CD14-positive monocyte (primary cell): ENCODE measurements at regions of chr19 and their contacts with region 1.

Region 1: DNA sequence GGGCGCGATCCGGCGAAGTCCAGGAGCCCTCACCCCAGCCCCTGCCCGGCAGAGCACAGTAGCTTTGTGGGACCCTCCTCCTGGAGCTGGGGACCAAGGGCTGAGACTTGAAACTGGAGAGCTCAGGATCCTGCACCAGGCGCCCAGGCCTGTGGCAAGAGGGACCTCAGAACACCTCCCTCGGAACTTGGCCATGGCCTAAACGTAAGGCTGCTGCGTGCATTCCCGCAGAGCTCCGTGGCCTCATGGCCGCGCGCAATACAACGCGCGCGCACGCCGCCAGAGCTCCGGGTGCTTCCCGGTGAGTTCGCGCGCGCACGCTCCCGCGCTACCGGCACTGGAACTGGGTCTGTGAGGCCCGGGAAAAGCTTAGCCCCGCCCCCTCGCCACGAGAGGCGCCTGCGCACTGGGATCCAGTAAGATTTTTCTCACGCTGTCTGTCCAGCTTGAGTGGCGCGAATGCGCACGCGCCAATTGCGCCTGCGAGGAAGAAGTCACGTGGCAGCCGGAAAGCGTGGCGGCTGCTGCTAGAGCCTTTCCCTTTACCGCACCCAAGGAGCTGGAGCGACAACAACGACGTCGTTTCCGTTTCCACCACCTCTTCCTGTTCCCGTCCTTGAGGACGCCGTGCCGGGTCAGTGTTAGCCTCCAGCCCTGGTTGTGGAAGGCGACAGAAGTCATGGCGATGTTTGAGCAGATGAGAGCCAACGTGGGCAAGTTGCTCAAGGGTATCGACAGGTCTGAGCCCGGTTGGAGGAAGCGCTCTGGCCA is at the start of gene EIF3K:
- DNase-seq: peak; percentile 99 to 100 (median 99)
- H3K4me3 ChIP-seq: peak within 1 kb of the TSS; percentile 87 to 100 (median 99)
- H3K4me3 Mint-ChIP-seq: peak within 1 kb of the TSS; percentile 99 to 100
- H3K27ac ChIP-seq: peak within 1 kb of the TSS; percentile 83 to 97
- H3K27ac Mint-ChIP-seq: peak within 1 kb of the TSS; percentile 97 to 100 (median 99)
- H3K4me1 ChIP-seq: peaks cover 35 to 44% of the 10 kb centered on the region in 2 donors
- H3K4me1 Mint-ChIP-seq: peaks cover 31% of the 10 kb centered on the region
- H3K27me3 ChIP-seq: no peaks in the 10 kb centered on the region
- H3K27me3 Mint-ChIP-seq: peaks cover 0 to 2% (median 1%) of the 10 kb centered on the region in 3 donors
- CTCF ChIP-seq: no peak
- polyA plus RNA-seq, gene EIF3K: 326 to 1,088 (median 381) TPM

Region 2: GRCh38 chr19:38315657-38316476 is 302.9 kb before region 1 on chr19 and contains the start of gene YIF1B:
- intact Hi-C with region 1: loop called in 1 of 2 experiments (anchors 5 kb)
- DNase-seq: peak; percentile 94 to 97 (median 95)
- H3K4me3 ChIP-seq: peak within 1 kb of the TSS; percentile 44 to 85 (median 61)
- H3K4me3 Mint-ChIP-seq: peak within 1 kb of the TSS; percentile 77 to 91
- H3K27ac ChIP-seq: peak within 1 kb of the TSS; percentile 91 to 92
- H3K27ac Mint-ChIP-seq: peak within 1 kb of the TSS; percentile 92 to 98 (median 95)
- H3K4me1 ChIP-seq: peaks cover 69 to 85% of the 10 kb centered on the region in 2 donors
- H3K4me1 Mint-ChIP-seq: peaks cover 68% of the 10 kb centered on the region
- H3K27me3 ChIP-seq: no peaks in the 10 kb centered on the region
- H3K27me3 Mint-ChIP-seq: peaks cover 2 to 4% (median 3%) of the 10 kb centered on the region in 3 donors
- CTCF ChIP-seq: no peak
- polyA plus RNA-seq, gene YIF1B: 79.4 to 90.5 (median 86.1) TPM

Region 3: DNA sequence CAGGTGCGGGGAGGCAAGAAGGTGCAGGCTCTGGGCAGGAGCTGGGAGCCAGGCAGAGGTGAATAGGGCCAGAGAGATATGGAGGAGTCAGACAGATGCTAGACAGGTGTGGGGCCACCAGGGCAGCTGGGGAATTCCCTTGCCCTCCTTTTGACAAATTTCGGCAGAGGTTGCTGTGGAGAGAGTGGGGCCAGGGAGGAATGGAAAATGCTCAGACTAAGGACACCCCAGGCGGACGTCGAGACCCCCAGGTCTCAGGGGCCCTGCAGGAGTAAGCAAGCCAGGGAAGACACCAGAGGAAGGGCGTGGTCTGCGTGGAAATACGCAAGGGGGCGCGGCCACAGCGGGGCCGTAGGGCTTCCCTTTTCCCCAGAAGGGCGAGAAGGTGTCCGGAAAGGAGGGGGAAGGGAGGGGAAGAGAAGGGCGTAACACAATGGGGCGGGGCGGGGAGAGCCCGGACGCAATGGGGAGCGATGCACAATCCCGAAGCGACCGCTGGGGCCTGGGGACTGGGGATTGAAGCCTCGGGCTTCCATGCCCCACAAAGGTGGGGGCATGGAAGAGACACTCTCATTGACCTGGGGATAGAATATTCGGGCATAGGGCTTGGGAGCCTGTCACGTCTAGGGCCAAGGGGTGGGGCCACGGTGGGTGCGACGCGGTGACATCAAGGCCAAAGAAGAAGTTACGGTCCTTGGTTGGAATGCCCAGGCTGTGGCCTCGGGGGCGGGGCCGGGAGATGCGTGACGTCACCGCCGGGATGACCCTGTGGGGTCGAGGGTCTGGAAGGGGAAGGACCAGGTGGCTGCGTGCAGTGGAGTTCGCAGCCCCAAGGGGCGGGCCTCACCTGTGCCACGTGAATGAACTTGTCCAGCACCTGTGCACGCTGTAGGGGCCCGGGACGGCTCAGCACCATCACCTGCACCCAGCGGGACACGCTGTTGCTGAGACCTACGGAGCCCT is 200.9 kb before region 1 on chr19:
- intact Hi-C with region 1: loop called in 1 of 2 experiments (anchors 5 kb)
- DNase-seq: peak; percentile 91 to 94 (median 93)
- H3K4me3 ChIP-seq: peak overlapping the region; percentile 26 to 83 (median 56)
- H3K4me3 Mint-ChIP-seq: peak overlapping the region; percentile 86 to 96
- H3K27ac ChIP-seq: peak overlapping the region; percentile 86 to 92
- H3K27ac Mint-ChIP-seq: peak overlapping the region; percentile 93 to 99 (median 99)
- H3K4me1 ChIP-seq: peaks cover 16 to 23% of the 10 kb centered on the region in 2 donors
- H3K4me1 Mint-ChIP-seq: peaks cover 28% of the 10 kb centered on the region
- H3K27me3 ChIP-seq: no peaks in the 10 kb centered on the region
- H3K27me3 Mint-ChIP-seq: peaks cover 0 to 2% (median 0%) of the 10 kb centered on the region in 3 donors
- CTCF ChIP-seq: no peak